ENCODE measurements at regions of chr20 and their contacts with region 1.

Region 1: GRCh38 chr20:63657937-63658748 is at the start of gene RTEL1:
- DNase-seq: peak; percentile 81 to 97 (median 88)
- ATAC-seq: peak; percentile 83
- H3K4me3 ChIP-seq: peak within 1 kb of the TSS; percentile 76 to 97
- H3K4me3 Mint-ChIP-seq: peak within 1 kb of the TSS; percentile 93
- H3K27ac ChIP-seq: peak within 1 kb of the TSS; percentile 72 to 75
- H3K27ac Mint-ChIP-seq: peak within 1 kb of the TSS; percentile 91
- H3K4me1 ChIP-seq: peaks cover 35% of the 10 kb centered on the region
- H3K4me1 Mint-ChIP-seq: peaks cover 36% of the 10 kb centered on the region
- H3K27me3 ChIP-seq: no peaks in the 10 kb centered on the region
- H3K27me3 Mint-ChIP-seq: no peaks in the 10 kb centered on the region
- CTCF ChIP-seq: no peak
- total RNA-seq, gene RTEL1: 21.4 to 24.9 TPM

Region 2: GRCh38 chr20:63612276-63612928 is 45.7 kb before region 1 on chr20:
- CTCF ChIA-PET with region 1: no interaction called
- POLR2A ChIA-PET with region 1: no interaction called
- intact Hi-C with region 1: loop called in 1 of 2 experiments (anchors 5 kb)
- DNase-seq: no peak
- ATAC-seq: no peak
- H3K4me3 ChIP-seq: no peak overlapping the region
- H3K4me3 Mint-ChIP-seq: no peak overlapping the region
- H3K27ac ChIP-seq: no peak overlapping the region
- H3K27ac Mint-ChIP-seq: no peak overlapping the region
- H3K4me1 ChIP-seq: no peaks in the 10 kb centered on the region
- H3K4me1 Mint-ChIP-seq: peaks cover 9% of the 10 kb centered on the region
- H3K27me3 ChIP-seq: no peaks in the 10 kb centered on the region
- H3K27me3 Mint-ChIP-seq: no peaks in the 10 kb centered on the region
- CTCF ChIP-seq: no peak

Region 3: DNA sequence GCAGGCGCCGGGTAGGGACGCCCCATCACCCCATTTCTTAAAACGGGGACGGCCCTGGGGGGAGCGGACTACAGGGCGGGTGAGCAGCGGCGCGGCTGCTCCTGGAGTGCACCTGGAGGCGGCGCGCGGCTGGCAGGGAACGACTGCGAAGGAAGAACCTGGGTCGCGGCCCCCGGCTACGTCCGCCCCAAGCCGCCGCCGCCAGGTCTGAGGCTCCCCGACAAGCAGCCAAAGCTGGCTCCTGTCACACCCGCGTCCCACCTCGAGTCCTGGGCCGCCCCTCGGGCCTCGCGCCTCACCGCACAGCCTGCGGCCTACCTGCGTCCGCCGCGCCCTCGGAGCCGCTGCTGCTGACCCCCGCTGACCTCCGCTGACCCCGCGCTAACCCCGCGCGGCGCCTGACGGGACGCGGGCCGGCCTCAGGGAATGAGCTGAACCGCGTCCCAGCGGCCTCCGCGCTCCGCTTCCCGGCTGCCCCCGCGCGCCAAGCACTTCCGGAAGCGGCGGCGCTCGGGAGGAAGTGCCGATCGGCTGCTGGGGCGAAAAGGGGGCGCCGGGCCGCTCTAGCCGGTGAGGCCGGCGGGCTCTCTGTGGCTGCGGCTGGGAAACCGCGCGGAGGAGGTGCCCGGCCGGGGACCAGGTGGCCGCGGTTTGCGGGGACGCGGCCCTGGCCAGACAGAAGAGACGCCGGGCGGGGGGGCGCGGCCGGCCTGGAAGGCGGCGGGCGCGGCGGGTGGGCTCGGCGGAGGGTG is 49.6 kb after region 1 on chr20 and contains the starts of genes ARFRP1 and ZGPAT:
- CTCF ChIA-PET with region 1: no interaction called
- POLR2A ChIA-PET with region 1: interaction called, 7 read pairs
- intact Hi-C with region 1: loop called (anchors 1 kb)
- DNase-seq: peak; percentile 70 to 94 (median 86)
- ATAC-seq: peak; percentile 79
- H3K4me3 ChIP-seq: peak within 1 kb of the TSS; percentile 67 to 97
- H3K4me3 Mint-ChIP-seq: peak within 1 kb of the TSS; percentile 90
- H3K27ac ChIP-seq: peak within 1 kb of the TSS; percentile 51 to 71
- H3K27ac Mint-ChIP-seq: peak within 1 kb of the TSS; percentile 90
- H3K4me1 ChIP-seq: peaks cover 43% of the 10 kb centered on the region
- H3K4me1 Mint-ChIP-seq: peaks cover 42% of the 10 kb centered on the region
- H3K27me3 ChIP-seq: no peaks in the 10 kb centered on the region
- H3K27me3 Mint-ChIP-seq: no peaks in the 10 kb centered on the region
- CTCF ChIP-seq: no peak
- total RNA-seq, gene ARFRP1: 25.1 to 28.6 TPM
- total RNA-seq, gene ZGPAT: 25.5 to 25.7 TPM

Region 4: GRCh38 chr20:63942250-63942959 is 284.3 kb after region 1 on chr20:
- CTCF ChIA-PET with region 1: no interaction called
- POLR2A ChIA-PET with region 1: no interaction called
- intact Hi-C with region 1: loop called in 1 of 2 experiments (anchors 1 kb)
- DNase-seq: peak in 3 of 9 experiments; percentile 45 to 59 (median 56)
- ATAC-seq: no peak
- H3K4me3 ChIP-seq: no peak overlapping the region
- H3K4me3 Mint-ChIP-seq: peak overlapping the region; percentile 57
- H3K27ac ChIP-seq: peak overlapping the region; percentile 27 to 58
- H3K27ac Mint-ChIP-seq: peak overlapping the region; percentile 45
- H3K4me1 ChIP-seq: peaks cover 23% of the 10 kb centered on the region
- H3K4me1 Mint-ChIP-seq: peaks cover 23% of the 10 kb centered on the region
- H3K27me3 ChIP-seq: no peaks in the 10 kb centered on the region
- H3K27me3 Mint-ChIP-seq: no peaks in the 10 kb centered on the region
- CTCF ChIP-seq: no peak

Region 5: GRCh38 chr20:64062596-64063388 is 404.6 kb after region 1 on chr20 and contains the start of gene TCEA2:
- CTCF ChIA-PET with region 1: no interaction called
- POLR2A ChIA-PET with region 1: no interaction called
- intact Hi-C with region 1: loop called in 1 of 2 experiments (anchors 1 kb)
- DNase-seq: peak; percentile 84 to 97 (median 93)
- ATAC-seq: peak; percentile 94
- H3K4me3 ChIP-seq: peak within 1 kb of the TSS; percentile 47 to 68
- H3K4me3 Mint-ChIP-seq: peak within 1 kb of the TSS; percentile 82
- H3K27ac ChIP-seq: peak within 1 kb of the TSS; percentile 42 to 67
- H3K27ac Mint-ChIP-seq: peak within 1 kb of the TSS; percentile 63
- H3K4me1 ChIP-seq: peaks cover 48% of the 10 kb centered on the region
- H3K4me1 Mint-ChIP-seq: peaks cover 36% of the 10 kb centered on the region
- H3K27me3 ChIP-seq: no peaks in the 10 kb centered on the region
- H3K27me3 Mint-ChIP-seq: no peaks in the 10 kb centered on the region
- CTCF ChIP-seq: no peak
- total RNA-seq, gene TCEA2: 18.2 to 18.4 TPM

Region 6: GRCh38 chr20:64279826-64280459 is 621.8 kb after region 1 on chr20:
- CTCF ChIA-PET with region 1: no interaction called
- POLR2A ChIA-PET with region 1: no interaction called
- intact Hi-C with region 1: no loop called
- DNase-seq: no peak
- ATAC-seq: peak; percentile 29
- H3K4me3 ChIP-seq: no peak overlapping the region
- H3K4me3 Mint-ChIP-seq: no peak overlapping the region
- H3K27ac ChIP-seq: no peak overlapping the region
- H3K27ac Mint-ChIP-seq: no peak overlapping the region
- H3K4me1 ChIP-seq: peaks cover 5% of the 10 kb centered on the region
- H3K4me1 Mint-ChIP-seq: peaks cover 16% of the 10 kb centered on the region
- H3K27me3 ChIP-seq: no peaks in the 10 kb centered on the region
- H3K27me3 Mint-ChIP-seq: no peaks in the 10 kb centered on the region
- CTCF ChIP-seq: no peak